ENCODE measurements at regions of chr1 and their contacts with region 1.

Region 1: DNA sequence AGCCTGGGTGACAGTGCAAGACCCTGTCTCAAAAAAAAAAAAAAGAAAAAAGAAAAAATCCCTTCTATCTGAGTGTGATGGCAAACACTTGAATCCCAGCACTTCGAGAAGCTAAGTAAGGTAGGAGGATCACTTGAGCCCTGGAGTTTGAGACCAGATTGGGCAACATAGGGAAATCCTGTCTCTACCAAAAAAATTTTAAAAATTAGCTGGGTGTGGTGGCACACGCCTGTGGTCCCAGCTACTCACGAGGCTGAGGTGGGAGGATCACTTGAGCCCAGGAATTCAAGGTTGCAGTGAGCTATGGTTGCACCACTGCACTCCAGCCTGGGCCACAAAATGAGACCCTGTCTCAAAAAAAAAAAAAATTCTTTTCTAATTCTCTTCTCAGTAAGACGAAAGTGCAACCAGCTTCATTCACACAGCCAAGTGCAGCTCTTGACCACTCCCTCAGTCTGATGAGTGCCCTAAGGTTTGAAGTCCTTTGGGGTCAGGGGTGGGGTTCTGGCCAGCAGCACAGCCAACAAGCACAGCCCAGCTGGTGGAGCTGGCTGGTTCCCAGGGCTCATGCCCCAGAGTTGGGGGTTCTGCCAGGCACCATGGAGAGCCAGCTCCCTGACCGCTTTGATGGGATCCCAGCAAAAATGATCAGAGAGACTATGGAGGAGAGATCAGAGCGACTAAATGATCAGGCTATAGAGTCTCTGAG is 8.0 kb downstream of the SLC2A5 start:
- DNase-seq: no peak
- H3K4me3 ChIP-seq: no peak overlapping the region
- H3K27ac ChIP-seq: peak overlapping the region in 2 of 4 donors; percentile 11 to 16
- H3K4me1 ChIP-seq: peaks cover 0 to 38% (median 27%) of the 10 kb centered on the region in 3 donors
- H3K27me3 ChIP-seq: no peaks in the 10 kb centered on the region
- CTCF ChIP-seq: no peak
- POLR2A ChIP-seq: no peak

Region 2: DNA sequence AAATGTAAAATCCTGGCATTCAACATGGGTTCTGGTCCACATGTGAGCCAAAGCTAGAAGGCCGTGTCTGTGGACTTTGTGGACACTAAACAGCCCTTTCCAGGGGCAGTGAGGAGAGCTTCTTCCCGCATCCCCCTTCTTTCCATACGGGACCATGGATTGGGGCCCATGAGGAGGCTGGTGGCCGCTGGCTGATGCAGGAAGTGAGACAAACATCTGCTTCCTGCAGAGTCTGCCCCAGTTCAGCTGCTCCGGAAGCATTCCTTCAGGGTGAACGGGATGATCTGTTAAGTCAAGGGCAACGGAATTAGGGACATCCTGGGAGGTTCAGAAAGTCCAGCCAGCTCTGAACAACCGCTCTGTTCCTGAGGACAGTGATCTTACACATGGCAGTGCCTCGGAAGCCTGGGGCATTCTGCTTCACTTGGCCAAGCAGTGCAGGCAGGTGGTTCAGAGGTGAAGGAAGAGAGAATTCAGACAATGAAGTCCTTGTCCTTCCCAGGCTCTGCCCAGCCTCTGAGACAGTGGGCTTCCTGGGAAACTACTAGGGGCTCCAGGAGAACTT is 114.2 kb before region 1 on chr1:
- intact Hi-C with region 1: loop called (anchors 5 kb)
- DNase-seq: no peak
- H3K4me3 ChIP-seq: no peak overlapping the region
- H3K27ac ChIP-seq: no peak overlapping the region
- H3K4me1 ChIP-seq: peaks cover 0 to 2% (median under 1%) of the 10 kb centered on the region in 3 donors
- H3K27me3 ChIP-seq: no peaks in the 10 kb centered on the region
- CTCF ChIP-seq: no peak
- POLR2A ChIP-seq: no peak

Measured in esophagus squamous epithelium (tissue), 5 donors.